ENCODE measurements at regions of chr1 and their contacts with region 1.

Region 1: GRCh38 chr1:14113841-14114567 is 414.0 kb downstream of the PRDM2 start:
- DNase-seq: peak; percentile 59 to 77
- H3K4me3 ChIP-seq: no peak overlapping the region
- H3K27ac ChIP-seq: no peak overlapping the region
- H3K4me1 ChIP-seq: no peaks in the 10 kb centered on the region; a peak in 2 of 7 replicates
- H3K27me3 ChIP-seq: no peaks in the 10 kb centered on the region
- CTCF ChIP-seq: peak; percentile 79 to 94 (median 93)
- EP300 ChIP-seq: no peak
- POLR2A ChIP-seq: no peak
- RAD21 ChIP-seq: peak; percentile 98 to 100

Region 2: GRCh38 chr1:13965770-13966398 is 148.1 kb before region 1 on chr1:
- CTCF ChIA-PET with region 1: interaction called, 13 read pairs
- POLR2A ChIA-PET with region 1: no interaction called
- DNase-seq: peak; percentile 33 to 61
- H3K4me3 ChIP-seq: no peak overlapping the region
- H3K27ac ChIP-seq: no peak overlapping the region
- H3K4me1 ChIP-seq: no peaks in the 10 kb centered on the region; a peak in 1 of 7 replicates
- H3K27me3 ChIP-seq: no peaks in the 10 kb centered on the region
- CTCF ChIP-seq: peak; percentile 75 to 89 (median 86)
- EP300 ChIP-seq: no peak
- POLR2A ChIP-seq: no peak
- RAD21 ChIP-seq: peak; percentile 97

Region 3: GRCh38 chr1:14245954-14246353 is 131.9 kb after region 1 on chr1:
- CTCF ChIA-PET with region 1: interaction called, 11 read pairs
- POLR2A ChIA-PET with region 1: no interaction called
- DNase-seq: no peak
- H3K4me3 ChIP-seq: no peak overlapping the region
- H3K27ac ChIP-seq: no peak overlapping the region
- H3K4me1 ChIP-seq: peaks cover 0 to 3% (median 0%) of the 10 kb centered on the region in 4 experiments; a peak in 1 of 7 replicates
- H3K27me3 ChIP-seq: no peaks in the 10 kb centered on the region
- CTCF ChIP-seq: no peak
- EP300 ChIP-seq: no peak
- POLR2A ChIP-seq: no peak
- RAD21 ChIP-seq: no peak

Region 4: GRCh38 chr1:14282707-14283106 is 168.7 kb after region 1 on chr1:
- CTCF ChIA-PET with region 1: no interaction called
- POLR2A ChIA-PET with region 1: no interaction called
- DNase-seq: peak in 1 of 2 experiments; percentile 48
- H3K4me3 ChIP-seq: 0 out of 8 replicates have a peak overlapping the region, but pooled peaks of 1 of the 4 experiments have one; percentile 4
- H3K27ac ChIP-seq: no peak overlapping the region
- H3K4me1 ChIP-seq: peaks cover 1 to 6% (median 5%) of the 10 kb centered on the region in 4 experiments; a peak in 6 of 7 replicates
- H3K27me3 ChIP-seq: no peaks in the 10 kb centered on the region
- CTCF ChIP-seq: no peak
- EP300 ChIP-seq: no peak
- POLR2A ChIP-seq: no peak
- RAD21 ChIP-seq: no peak

Region 5: GRCh38 chr1:14415395-14415794 is 301.4 kb after region 1 on chr1:
- CTCF ChIA-PET with region 1: interaction called, 14 read pairs
- POLR2A ChIA-PET with region 1: no interaction called
- DNase-seq: peak in 1 of 2 experiments; percentile 69
- H3K4me3 ChIP-seq: no peak overlapping the region
- H3K27ac ChIP-seq: no peak overlapping the region
- H3K4me1 ChIP-seq: peaks cover 0 to 4% (median 1%) of the 10 kb centered on the region in 4 experiments; a peak in 3 of 7 replicates
- H3K27me3 ChIP-seq: no peaks in the 10 kb centered on the region
- CTCF ChIP-seq: peak; percentile 69 to 80 (median 72)
- EP300 ChIP-seq: no peak
- POLR2A ChIP-seq: no peak
- RAD21 ChIP-seq: peak; percentile 69 to 82